BJ (cell line): ENCODE measurements at regions of chr1 and their contacts with region 1.

Region 1: DNA sequence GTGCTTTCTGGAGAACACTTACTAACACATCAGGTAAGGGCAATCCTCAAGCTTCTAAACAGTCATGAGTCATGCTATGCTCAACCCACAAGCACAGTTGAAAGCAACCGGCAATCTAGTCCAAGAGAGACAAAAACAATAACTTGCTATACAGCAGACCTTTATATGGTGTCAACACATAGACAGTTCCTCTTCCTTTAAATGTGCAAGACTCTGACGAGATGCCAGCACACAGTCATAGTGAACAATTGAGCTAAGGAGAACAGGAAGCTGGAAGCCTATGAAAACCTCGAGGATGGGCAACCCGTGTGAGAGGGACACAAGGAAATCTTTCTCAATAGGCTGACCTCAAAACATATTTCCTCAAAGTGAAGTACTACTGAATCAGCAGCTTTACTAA is 5.3 kb downstream of the ADIPOR1 start:
- DNase-seq: no peak
- H3K4me3 ChIP-seq: no peak overlapping the region
- H3K27me3 ChIP-seq: no peaks in the 10 kb centered on the region
- CTCF ChIP-seq: no peak

Region 2: DNA sequence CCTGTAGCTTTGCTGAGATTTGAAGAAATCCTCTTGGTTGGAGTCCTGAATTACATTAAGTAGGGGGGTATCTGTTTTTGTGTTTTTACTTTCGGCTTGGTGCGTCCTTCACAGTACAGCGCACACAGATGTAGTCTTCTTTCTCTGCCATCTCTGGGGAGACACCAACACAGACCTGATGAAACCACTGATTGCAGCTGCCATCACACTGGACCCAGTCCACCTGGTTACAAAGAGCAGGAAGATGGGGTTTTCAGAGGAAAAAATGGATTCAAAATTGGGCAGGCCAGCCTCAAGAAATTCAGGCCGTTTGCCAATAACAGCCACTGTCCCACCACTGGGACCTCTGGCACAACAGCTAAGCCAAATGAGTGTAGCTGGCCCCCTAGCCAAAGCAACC is 223.9 kb before region 1 on chr1:
- CTCF ChIA-PET with region 1: no interaction called
- POLR2A ChIA-PET with region 1: interaction called, 11 read pairs
- DNase-seq: no peak
- H3K4me3 ChIP-seq: no peak overlapping the region
- H3K27me3 ChIP-seq: no peaks in the 10 kb centered on the region
- CTCF ChIP-seq: no peak